Body of pancreas (tissue), 4 donors: ENCODE measurements at regions of chr9 and their contacts with region 1.

Region 1: DNA sequence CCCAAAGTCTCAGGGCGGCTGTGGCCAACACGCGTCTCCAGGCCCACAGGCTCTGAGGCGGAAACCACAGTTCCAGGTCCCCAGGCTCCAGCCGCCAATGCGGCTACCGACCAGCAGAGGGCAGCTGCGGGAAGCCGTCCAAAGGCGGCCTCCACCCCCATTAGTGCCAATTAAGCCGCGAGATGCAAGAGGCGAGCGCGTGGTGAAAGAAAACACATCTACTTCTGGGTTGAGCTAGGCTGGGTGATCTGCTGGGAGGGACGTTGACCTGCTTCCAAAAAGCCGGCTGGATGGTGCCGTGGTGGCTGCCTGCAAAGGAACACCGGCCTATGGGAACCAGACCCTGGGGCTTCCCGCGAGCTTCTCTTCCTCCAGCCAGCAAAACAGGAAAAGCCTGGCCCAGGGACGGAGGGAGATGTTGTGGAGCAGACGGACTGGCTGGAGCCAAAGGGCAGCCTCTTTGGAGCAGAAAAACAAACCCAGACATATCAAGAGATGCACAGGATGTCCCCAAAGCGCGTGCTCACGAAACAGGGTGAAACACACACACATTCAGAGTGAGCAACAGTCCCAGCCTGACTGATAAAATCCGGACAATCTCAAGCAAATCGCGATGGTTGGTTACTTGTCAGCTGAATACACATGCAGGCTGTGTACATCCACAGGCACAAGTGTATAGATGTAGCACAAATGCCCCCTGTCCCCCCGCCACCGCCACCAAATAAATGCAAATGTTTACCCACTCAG is 187.1 kb upstream of the BRINP1 start:
- DNase-seq: peak; percentile 64 to 74 (median 68)
- ATAC-seq: peak; percentile 92
- H3K4me3 ChIP-seq: no peak overlapping the region
- H3K27ac ChIP-seq: no peak overlapping the region
- H3K4me1 ChIP-seq: peaks cover 8% of the 10 kb centered on the region
- H3K27me3 ChIP-seq: peaks cover 0 to 4% of the 10 kb centered on the region in 2 donors
- CTCF ChIP-seq: peak; percentile 72 to 89 (median 80)
- POLR2A ChIP-seq: no peak

Region 2: GRCh38 chr9:119974026-119974425 is 417.7 kb after region 1 on chr9:
- intact Hi-C with region 1: loop called (anchors 5 kb)
- DNase-seq: no peak
- ATAC-seq: no peak
- H3K4me3 ChIP-seq: no peak overlapping the region
- H3K27ac ChIP-seq: no peak overlapping the region
- H3K4me1 ChIP-seq: no peaks in the 10 kb centered on the region
- H3K27me3 ChIP-seq: no peaks in the 10 kb centered on the region
- CTCF ChIP-seq: no peak
- POLR2A ChIP-seq: no peak